GM12878 (cell line): ENCODE measurements at regions of chr1 and their contacts with region 1.

Region 1: GRCh38 chr1:150567717-150568593 is 11.5 kb downstream of the MCL1 start:
- DNase-seq: no peak
- ATAC-seq: peak; percentile 14
- H3K4me3 ChIP-seq: peak overlapping the region; percentile 49
- H3K27ac ChIP-seq: peak overlapping the region; percentile 98
- H3K4me1 ChIP-seq: peaks cover 70% of the 10 kb centered on the region
- H3K27me3 ChIP-seq: no peaks in the 10 kb centered on the region
- CTCF ChIP-seq: no peak
- EP300 ChIP-seq: peak in 1 of 2 experiments; percentile 42; a peak in 1 of 4 replicates
- POLR2A ChIP-seq: peak; percentile 25; the same call in 1 of the 2 replicates
- RAD21 ChIP-seq: no peak

Region 2: GRCh38 chr1:150613061-150613920 is 45.3 kb after region 1 on chr1:
- CTCF ChIA-PET with region 1: interaction called, 390 read pairs
- POLR2A ChIA-PET with region 1: interaction called, 95 read pairs
- RAD21 ChIA-PET with region 1: interaction called, 149 read pairs
- SMC1A ChIA-PET with region 1: interaction called, 367 read pairs
- in situ Hi-C with region 1: loop called (anchors 5 kb)
- intact Hi-C with region 1: loop called (anchors 2 kb)
- DNase-seq: peak; percentile 79
- ATAC-seq: peak; percentile 68
- H3K4me3 ChIP-seq: no peak overlapping the region
- H3K27ac ChIP-seq: peak overlapping the region; percentile 80
- H3K4me1 ChIP-seq: peaks cover 41% of the 10 kb centered on the region
- H3K27me3 ChIP-seq: no peaks in the 10 kb centered on the region
- CTCF ChIP-seq: no peak
- EP300 ChIP-seq: peak; percentile 85 to 98
- POLR2A ChIP-seq: 0 out of 2 replicates have a peak, but pooled peaks have one; percentile 20
- RAD21 ChIP-seq: no peak

Region 3: GRCh38 chr1:150621497-150622302 is 53.7 kb after region 1 on chr1:
- CTCF ChIA-PET with region 1: interaction called, 390 read pairs
- POLR2A ChIA-PET with region 1: interaction called, 67 read pairs
- RAD21 ChIA-PET with region 1: interaction called, 149 read pairs
- SMC1A ChIA-PET with region 1: interaction called, 367 read pairs
- in situ Hi-C with region 1: no loop called
- intact Hi-C with region 1: no loop called
- DNase-seq: no peak
- ATAC-seq: peak; percentile 62
- H3K4me3 ChIP-seq: no peak overlapping the region
- H3K27ac ChIP-seq: peak overlapping the region; percentile 67
- H3K4me1 ChIP-seq: peaks cover 26% of the 10 kb centered on the region
- H3K27me3 ChIP-seq: no peaks in the 10 kb centered on the region
- CTCF ChIP-seq: peak; percentile 57 to 74 (median 63); a peak in 5 of 6 replicates
- EP300 ChIP-seq: no peak
- POLR2A ChIP-seq: no peak
- RAD21 ChIP-seq: peak; percentile 63